MCF 10A (cell line): ENCODE measurements at regions of chr11 and their contacts with region 1.

Region 1: DNA sequence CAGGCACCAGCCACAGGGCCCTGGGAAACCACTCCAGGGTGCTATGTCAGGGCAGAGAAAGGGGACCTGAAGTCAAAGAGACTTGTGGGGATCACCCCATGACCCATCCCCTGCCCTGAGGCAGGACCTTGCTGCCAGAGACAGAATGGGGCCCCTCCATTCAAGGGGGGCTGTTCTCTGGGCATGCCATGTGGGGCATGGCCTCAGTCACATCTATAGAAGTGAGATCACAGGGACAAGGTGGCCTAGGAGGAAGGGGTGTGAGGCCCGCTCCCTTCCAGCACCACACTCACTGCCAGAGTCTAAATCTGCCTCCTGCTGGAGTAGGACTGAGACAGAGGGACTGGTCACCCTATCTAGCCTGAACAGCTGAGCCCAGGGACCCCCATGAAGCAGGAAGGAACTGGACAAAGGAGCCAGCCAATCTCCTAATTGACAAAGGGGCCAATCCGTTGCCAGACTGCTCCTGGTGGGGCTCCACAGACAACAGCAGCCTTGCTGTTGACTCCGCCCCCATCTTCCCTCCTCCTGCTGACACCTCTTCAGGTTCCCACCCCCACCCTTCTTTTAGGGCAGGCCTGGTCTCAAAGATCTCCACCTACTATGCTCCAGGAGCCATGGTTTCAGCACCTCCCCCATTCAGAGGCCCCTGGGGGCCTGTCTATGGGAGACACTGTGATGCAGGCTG is 26.0 kb downstream of the NEAT1 start:
- DNase-seq: peak; percentile 71
- H3K4me3 Mint-ChIP-seq: no peak overlapping the region
- H3K27ac Mint-ChIP-seq: peak overlapping the region; percentile 93
- H3K4me1 Mint-ChIP-seq: peaks cover 21% of the 10 kb centered on the region
- H3K27me3 Mint-ChIP-seq: no peaks in the 10 kb centered on the region
- CTCF ChIP-seq: no peak

Region 2: DNA sequence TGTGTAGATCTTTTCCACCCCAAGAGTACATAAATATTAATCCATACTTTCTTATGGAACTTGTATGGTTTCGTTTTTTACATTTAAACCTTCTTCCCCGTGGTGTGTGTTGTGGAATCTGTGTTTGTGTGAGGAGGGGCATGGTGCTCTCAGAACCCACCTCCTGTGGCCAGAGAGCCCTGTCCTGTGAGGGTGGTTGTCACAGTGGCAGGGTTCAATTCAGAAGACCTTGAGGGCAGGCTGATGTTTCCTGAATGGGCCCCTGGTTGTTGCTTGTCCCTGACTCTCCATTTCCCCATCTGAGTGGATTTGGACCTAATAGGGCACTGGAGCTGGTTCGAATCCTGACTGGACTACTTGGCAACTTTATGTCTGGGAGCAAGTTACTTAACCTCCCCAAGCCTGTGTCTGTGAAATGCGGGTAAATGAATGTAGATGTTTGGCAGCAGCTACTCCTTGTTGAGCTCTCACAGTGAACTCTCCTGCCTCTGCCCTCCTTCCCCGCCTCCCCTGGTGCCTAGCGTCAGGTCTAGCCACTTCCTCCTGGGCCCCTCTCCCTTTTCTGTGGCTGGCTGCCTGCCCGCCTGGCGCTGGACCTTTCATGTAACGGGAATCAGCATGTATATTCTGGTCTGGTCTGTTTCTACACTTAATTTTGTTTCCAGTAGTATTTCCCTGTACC is 18.7 kb before region 1 on chr11:
- CTCF ChIA-PET with region 1: no interaction called
- POLR2A ChIA-PET with region 1: interaction called, 391 read pairs
- intact Hi-C with region 1: no loop called
- DNase-seq: peak; percentile 83
- H3K4me3 Mint-ChIP-seq: peak overlapping the region; percentile 98
- H3K27ac Mint-ChIP-seq: peak overlapping the region; percentile 62
- H3K4me1 Mint-ChIP-seq: peaks cover 49% of the 10 kb centered on the region
- H3K27me3 Mint-ChIP-seq: no peaks in the 10 kb centered on the region
- CTCF ChIP-seq: no peak

Region 3: DNA sequence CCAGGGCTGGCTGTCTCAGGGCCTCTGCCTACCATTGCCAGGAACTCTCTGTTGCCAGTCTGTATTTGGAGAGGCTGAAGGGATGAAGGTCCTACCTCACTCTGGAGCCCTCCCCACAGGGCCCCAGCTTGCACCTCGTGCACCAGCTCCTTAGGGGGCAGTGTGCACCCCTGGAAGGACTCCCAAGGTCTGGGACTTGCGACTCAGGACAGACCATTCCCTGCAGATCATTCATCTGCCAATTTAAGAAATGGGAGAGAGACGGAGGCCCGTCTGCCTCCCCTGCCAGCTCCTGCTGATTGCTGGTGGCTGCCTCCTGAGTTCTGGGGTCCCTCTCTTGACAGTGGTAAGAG is 22.8 kb after region 1 on chr11:
- CTCF ChIA-PET with region 1: no interaction called
- POLR2A ChIA-PET with region 1: interaction called, 81 read pairs
- intact Hi-C with region 1: no loop called
- DNase-seq: peak; percentile 85
- H3K4me3 Mint-ChIP-seq: no peak overlapping the region
- H3K27ac Mint-ChIP-seq: peak overlapping the region; percentile 97
- H3K4me1 Mint-ChIP-seq: peaks cover 15% of the 10 kb centered on the region
- H3K27me3 Mint-ChIP-seq: no peaks in the 10 kb centered on the region
- CTCF ChIP-seq: peak; percentile 25

Region 4: DNA sequence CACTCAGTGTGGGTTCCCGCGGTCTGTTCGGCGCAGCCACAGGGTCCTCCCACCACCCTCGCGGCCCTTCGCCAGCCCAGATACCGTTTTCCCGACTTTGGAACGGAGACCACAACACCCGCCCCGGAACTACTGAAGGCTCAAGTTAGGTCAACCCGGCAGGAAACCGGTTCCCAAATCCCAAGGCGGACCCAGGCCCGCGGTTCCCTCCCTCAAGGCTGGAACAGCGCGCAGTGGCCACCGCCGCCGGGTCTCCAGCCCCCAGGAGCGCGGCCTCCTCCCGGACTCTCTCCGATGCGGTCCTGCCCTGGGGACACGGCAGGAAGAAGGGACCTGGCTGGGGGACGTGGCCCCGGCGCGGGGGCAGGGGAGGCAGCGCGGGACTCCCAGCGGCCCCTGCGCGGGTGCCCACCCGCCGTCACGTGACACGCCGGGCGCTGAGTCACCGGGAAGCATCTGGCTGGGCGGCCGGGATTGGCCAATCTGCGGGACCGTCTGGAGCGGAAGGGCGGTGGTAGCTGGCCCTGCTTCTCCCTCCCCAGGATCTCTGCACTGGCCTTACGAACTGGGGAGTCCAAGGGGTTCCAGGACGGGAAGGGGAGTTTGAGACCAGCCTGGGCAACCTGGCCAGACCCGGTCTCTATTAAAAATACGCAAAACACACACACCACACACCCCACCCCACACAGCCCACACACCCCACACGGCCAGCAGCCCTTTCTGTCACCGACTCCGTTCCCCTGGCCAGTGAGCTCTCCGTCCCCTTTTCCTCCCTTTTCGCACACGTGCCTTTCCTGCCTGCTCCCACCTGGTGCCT is 28.8 kb after region 1 on chr11:
- CTCF ChIA-PET with region 1: interaction called, 3 read pairs
- POLR2A ChIA-PET with region 1: interaction called, 81 read pairs
- intact Hi-C with region 1: no loop called
- DNase-seq: peak; percentile 96
- H3K4me3 Mint-ChIP-seq: peak overlapping the region; percentile 95
- H3K27ac Mint-ChIP-seq: peak overlapping the region; percentile 95
- H3K4me1 Mint-ChIP-seq: peaks cover 16% of the 10 kb centered on the region
- H3K27me3 Mint-ChIP-seq: no peaks in the 10 kb centered on the region
- CTCF ChIP-seq: no peak

Region 5: GRCh38 chr11:65487413-65488272 is 39.1 kb after region 1 on chr11:
- CTCF ChIA-PET with region 1: interaction called, 4 read pairs
- POLR2A ChIA-PET with region 1: interaction called, 130 read pairs
- intact Hi-C with region 1: no loop called
- DNase-seq: peak; percentile 99
- H3K4me3 Mint-ChIP-seq: peak overlapping the region; percentile 24
- H3K27ac Mint-ChIP-seq: peak overlapping the region; percentile 79
- H3K4me1 Mint-ChIP-seq: peaks cover 47% of the 10 kb centered on the region
- H3K27me3 Mint-ChIP-seq: no peaks in the 10 kb centered on the region
- CTCF ChIP-seq: no peak